ENCODE measurements at regions of chr15 and their contacts with region 1.

Region 1: DNA sequence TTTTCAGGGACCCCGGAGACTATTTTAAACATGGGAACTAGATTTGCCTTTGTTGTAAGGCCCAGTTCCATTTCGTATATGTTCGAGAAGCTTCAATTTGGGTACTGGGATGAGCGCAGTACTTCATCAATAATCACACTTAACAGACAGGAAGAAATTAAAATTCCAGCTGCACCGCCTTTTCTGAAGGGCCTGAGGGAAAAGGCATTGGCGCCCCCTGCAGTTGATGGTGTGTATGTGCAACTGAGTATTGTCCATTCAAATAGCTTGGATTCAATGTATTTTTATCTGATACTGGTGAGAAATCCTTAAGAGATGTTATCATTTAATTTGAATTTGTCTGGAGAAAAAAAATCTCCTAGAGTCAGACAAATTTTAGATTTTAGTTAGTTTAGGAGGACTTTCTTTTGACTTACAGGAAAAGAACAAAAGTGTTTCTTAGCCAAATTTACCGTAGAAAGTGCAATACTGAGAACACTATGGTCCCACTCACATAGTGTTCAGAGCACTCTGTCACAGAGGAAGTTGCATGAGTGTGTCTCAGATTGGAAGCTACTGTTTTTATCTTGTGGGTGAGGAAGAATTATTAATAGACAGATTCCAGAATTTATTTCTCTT is 5.4 kb upstream of the ALDH1A2 start:
- DNase-seq: peak; percentile 61
- ATAC-seq: no peak
- H3K4me3 Mint-ChIP-seq: no peak overlapping the region
- H3K27ac Mint-ChIP-seq: no peak overlapping the region
- H3K4me1 Mint-ChIP-seq: peaks cover 3% of the 10 kb centered on the region
- H3K27me3 Mint-ChIP-seq: peaks cover 27% of the 10 kb centered on the region
- CTCF ChIP-seq: peak; percentile 95

Region 2: DNA sequence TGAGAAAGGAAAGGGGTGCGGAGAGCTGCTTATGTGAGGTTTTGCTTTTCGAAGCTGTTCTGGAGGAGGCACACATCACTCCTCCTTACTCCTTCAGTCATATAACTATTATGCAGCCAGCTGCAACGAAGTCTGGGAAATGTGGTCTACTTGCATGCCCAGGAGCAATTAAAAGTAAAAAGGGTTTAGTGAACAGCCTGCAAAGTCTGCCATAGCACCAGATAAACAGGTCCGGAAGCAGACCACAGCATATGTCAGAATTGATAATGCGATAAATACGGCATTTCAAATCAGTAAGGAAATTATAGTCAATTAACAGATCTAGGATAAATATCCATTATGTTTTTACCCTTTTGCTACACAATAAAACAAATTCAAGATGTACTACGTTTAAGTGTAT is 264.9 kb before region 1 on chr15:
- CTCF ChIA-PET with region 1: no interaction called
- POLR2A ChIA-PET with region 1: no interaction called
- intact Hi-C with region 1: no loop called
- DNase-seq: no peak
- ATAC-seq: no peak
- H3K4me3 Mint-ChIP-seq: no peak overlapping the region
- H3K27ac Mint-ChIP-seq: no peak overlapping the region
- H3K4me1 Mint-ChIP-seq: no peaks in the 10 kb centered on the region
- H3K27me3 Mint-ChIP-seq: no peaks in the 10 kb centered on the region
- CTCF ChIP-seq: no peak

Region 3: GRCh38 chr15:57872281-57873030 is 198.5 kb before region 1 on chr15:
- CTCF ChIA-PET with region 1: interaction called, 25 read pairs
- POLR2A ChIA-PET with region 1: no interaction called
- intact Hi-C with region 1: loop called (anchors 5 kb)
- DNase-seq: no peak
- ATAC-seq: no peak
- H3K4me3 Mint-ChIP-seq: no peak overlapping the region
- H3K27ac Mint-ChIP-seq: no peak overlapping the region
- H3K4me1 Mint-ChIP-seq: peaks cover 7% of the 10 kb centered on the region
- H3K27me3 Mint-ChIP-seq: peaks cover 38% of the 10 kb centered on the region
- CTCF ChIP-seq: no peak

Region 4: DNA sequence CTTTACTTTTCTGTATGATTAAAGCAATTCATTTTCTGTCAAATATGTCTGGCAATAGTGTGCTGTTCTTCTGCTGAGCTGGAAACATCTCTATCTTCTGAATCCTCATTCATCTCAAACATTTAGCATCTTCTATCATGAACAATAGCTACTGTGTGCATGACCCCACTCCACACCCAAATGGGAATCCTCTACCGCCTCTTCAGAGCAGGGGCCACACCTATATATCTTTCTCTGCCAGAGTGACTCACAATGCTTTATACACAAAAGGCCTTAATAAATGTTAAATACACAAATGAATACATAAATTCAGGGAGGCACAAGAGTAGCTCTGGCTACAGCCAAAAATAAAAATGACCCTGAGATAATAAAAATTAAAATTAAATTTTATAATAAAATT is 13.4 kb before region 1 on chr15:
- CTCF ChIA-PET with region 1: interaction called, 24 read pairs
- POLR2A ChIA-PET with region 1: no interaction called
- intact Hi-C with region 1: no loop called
- DNase-seq: no peak
- ATAC-seq: no peak
- H3K4me3 Mint-ChIP-seq: no peak overlapping the region
- H3K27ac Mint-ChIP-seq: no peak overlapping the region
- H3K4me1 Mint-ChIP-seq: no peaks in the 10 kb centered on the region
- H3K27me3 Mint-ChIP-seq: peaks cover 38% of the 10 kb centered on the region
- CTCF ChIP-seq: no peak

Region 5: DNA sequence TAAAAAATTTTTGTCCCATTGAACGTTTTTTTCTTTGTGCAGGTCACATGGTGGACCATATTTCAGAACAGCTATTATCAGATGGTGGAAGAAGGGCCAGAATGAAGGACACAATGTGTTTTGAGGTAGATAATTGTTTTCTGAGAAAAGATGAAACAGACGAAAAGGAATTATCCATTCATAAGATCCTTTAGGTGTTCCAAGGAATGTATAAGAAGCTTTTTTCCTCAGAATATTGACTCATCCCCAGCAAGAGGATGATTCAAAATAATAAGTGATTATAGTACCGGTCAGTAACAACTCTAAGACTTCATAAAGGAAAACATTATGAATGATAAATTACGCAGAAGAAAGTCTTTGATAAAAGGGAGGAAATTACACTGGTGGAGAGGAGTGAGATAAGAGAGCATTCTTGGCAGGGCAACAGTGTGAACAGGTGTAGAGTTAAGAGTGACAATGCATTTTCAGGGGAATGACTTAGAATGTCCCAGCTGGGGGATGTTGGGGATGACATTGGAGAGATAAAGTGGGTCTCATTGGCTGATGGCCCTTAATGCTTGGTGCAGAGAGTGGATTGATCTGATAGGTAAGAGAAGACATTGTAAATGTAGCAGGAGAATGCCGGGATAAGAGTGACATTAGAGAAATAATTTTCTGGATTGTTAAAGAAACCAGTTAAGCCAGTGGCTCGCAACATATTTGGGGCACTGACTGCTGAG is 40.2 kb after region 1 on chr15:
- CTCF ChIA-PET with region 1: no interaction called
- POLR2A ChIA-PET with region 1: no interaction called
- intact Hi-C with region 1: no loop called
- DNase-seq: no peak
- ATAC-seq: no peak
- H3K4me3 Mint-ChIP-seq: no peak overlapping the region
- H3K27ac Mint-ChIP-seq: no peak overlapping the region
- H3K4me1 Mint-ChIP-seq: no peaks in the 10 kb centered on the region
- H3K27me3 Mint-ChIP-seq: peaks cover 17% of the 10 kb centered on the region
- CTCF ChIP-seq: no peak

Region 6: DNA sequence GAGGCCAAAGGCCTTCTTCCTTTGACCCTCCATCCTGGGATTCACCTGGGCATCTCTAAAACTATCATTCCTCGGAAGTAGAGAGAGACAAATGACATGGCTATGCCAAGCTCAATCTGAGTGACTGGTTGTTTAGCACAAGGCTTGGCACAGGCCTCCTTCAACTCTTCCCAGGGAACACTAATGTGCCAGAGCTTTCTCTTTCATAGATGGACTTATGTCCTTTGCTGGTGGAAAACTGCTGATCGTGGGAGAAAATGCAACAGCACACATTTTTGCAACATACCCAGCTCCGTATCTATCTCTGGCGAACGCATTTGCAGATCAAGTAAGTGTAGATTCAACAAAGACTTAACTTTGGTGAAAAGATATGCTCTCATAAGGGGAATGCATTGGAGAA is 103.8 kb after region 1 on chr15:
- CTCF ChIA-PET with region 1: interaction called, 19 read pairs
- POLR2A ChIA-PET with region 1: no interaction called
- intact Hi-C with region 1: no loop called
- DNase-seq: no peak
- ATAC-seq: no peak
- H3K4me3 Mint-ChIP-seq: no peak overlapping the region
- H3K27ac Mint-ChIP-seq: no peak overlapping the region
- H3K4me1 Mint-ChIP-seq: no peaks in the 10 kb centered on the region
- H3K27me3 Mint-ChIP-seq: peaks cover 22% of the 10 kb centered on the region
- CTCF ChIP-seq: no peak

Measured in activated CD8-positive, alpha-beta T cell treated with anti-CD3 and anti-CD28 coated beads for 36 hours (primary cell).